ENCODE measurements at regions of chr10 and their contacts with region 1.

Region 1: DNA sequence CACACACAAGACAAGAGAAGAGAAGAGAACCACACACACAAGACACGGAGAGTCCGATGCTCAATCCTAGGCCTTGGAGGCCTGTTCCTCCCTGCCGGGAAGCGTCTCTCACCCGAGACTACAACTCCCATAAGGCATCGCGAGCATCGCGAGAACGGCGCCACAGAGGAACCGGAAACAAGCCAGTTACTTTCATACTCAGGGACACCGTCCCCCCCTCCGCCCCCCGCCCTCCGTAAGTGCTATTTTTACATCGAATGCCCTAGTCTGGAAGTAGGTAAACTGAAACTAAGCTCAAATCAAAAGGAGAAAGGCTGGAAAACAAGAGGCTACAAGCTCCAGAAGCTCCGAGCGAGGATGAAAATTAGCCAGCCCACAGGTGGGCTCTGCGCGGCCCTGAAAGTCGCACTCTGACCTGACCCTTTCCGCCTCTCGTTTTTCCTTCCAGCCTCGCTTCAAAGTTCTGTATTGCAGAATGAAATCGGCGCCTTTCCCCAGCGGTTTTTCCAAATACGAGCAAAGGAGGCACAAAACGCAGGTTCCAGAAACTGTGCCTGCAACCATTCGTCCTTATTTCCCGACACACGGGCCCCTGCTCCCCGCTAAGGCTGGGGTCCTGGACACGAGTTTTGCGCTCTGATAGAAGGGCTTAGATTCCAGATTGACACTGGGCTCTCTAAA is 11.5 kb upstream of the DNAJC12 start:
- DNase-seq: peak; percentile 90
- ATAC-seq: peak; percentile 95
- H3K4me3 Mint-ChIP-seq: peak overlapping the region; percentile 94
- H3K27ac Mint-ChIP-seq: peak overlapping the region; percentile 96
- H3K4me1 Mint-ChIP-seq: peaks cover 13% of the 10 kb centered on the region
- H3K27me3 Mint-ChIP-seq: no peaks in the 10 kb centered on the region
- CTCF ChIP-seq: no peak

Region 2: GRCh38 chr10:67764012-67764822 is 85.3 kb before region 1 on chr10:
- CTCF ChIA-PET with region 1: no interaction called
- POLR2A ChIA-PET with region 1: interaction called, 5 read pairs
- intact Hi-C with region 1: loop called (anchors 1 kb)
- DNase-seq: peak; percentile 98
- ATAC-seq: peak; percentile 78
- H3K4me3 Mint-ChIP-seq: peak overlapping the region; percentile 94
- H3K27ac Mint-ChIP-seq: peak overlapping the region; percentile 99
- H3K4me1 Mint-ChIP-seq: peaks cover 31% of the 10 kb centered on the region
- H3K27me3 Mint-ChIP-seq: peaks cover 4% of the 10 kb centered on the region
- CTCF ChIP-seq: no peak

Region 3: GRCh38 chr10:67837541-67838314 is 11.7 kb before region 1 on chr10 and contains the start of gene DNAJC12:
- CTCF ChIA-PET with region 1: no interaction called
- POLR2A ChIA-PET with region 1: no interaction called
- intact Hi-C with region 1: no loop called
- DNase-seq: no peak
- ATAC-seq: peak; percentile 69
- H3K4me3 Mint-ChIP-seq: no peak within 1 kb of the TSS
- H3K27ac Mint-ChIP-seq: no peak within 1 kb of the TSS
- H3K4me1 Mint-ChIP-seq: peaks cover 2% of the 10 kb centered on the region
- H3K27me3 Mint-ChIP-seq: no peaks in the 10 kb centered on the region
- CTCF ChIP-seq: no peak
- total RNA-seq, gene DNAJC12: 0.31 TPM in 1 of 2 replicates, not detected in the other

Region 4: GRCh38 chr10:67884313-67884841 is 34.9 kb after region 1 on chr10 and contains the start of gene SIRT1:
- CTCF ChIA-PET with region 1: interaction called, 3 read pairs
- POLR2A ChIA-PET with region 1: interaction called, 10 read pairs
- intact Hi-C with region 1: loop called (anchors 1 kb)
- DNase-seq: peak; percentile 97
- ATAC-seq: peak; percentile 81
- H3K4me3 Mint-ChIP-seq: peak within 1 kb of the TSS; percentile 92
- H3K27ac Mint-ChIP-seq: peak within 1 kb of the TSS; percentile 96
- H3K4me1 Mint-ChIP-seq: peaks cover 31% of the 10 kb centered on the region
- H3K27me3 Mint-ChIP-seq: no peaks in the 10 kb centered on the region
- CTCF ChIP-seq: no peak
- total RNA-seq, gene SIRT1: 30.1 and 31.6 TPM in 2 replicates

Region 5: GRCh38 chr10:68301790-68302502 is 452.5 kb after region 1 on chr10:
- CTCF ChIA-PET with region 1: interaction called, 44 read pairs
- POLR2A ChIA-PET with region 1: interaction called, 6 read pairs
- intact Hi-C with region 1: no loop called
- DNase-seq: no peak
- ATAC-seq: peak; percentile 62
- H3K4me3 Mint-ChIP-seq: no peak overlapping the region
- H3K27ac Mint-ChIP-seq: peak overlapping the region; percentile 90
- H3K4me1 Mint-ChIP-seq: peaks cover 31% of the 10 kb centered on the region
- H3K27me3 Mint-ChIP-seq: no peaks in the 10 kb centered on the region
- CTCF ChIP-seq: no peak

Region 6: GRCh38 chr10:68526626-68527307 is 677.3 kb after region 1 on chr10:
- CTCF ChIA-PET with region 1: no interaction called
- POLR2A ChIA-PET with region 1: no interaction called
- intact Hi-C with region 1: loop called (anchors 5 kb)
- DNase-seq: no peak
- ATAC-seq: no peak
- H3K4me3 Mint-ChIP-seq: peak overlapping the region; percentile 86
- H3K27ac Mint-ChIP-seq: peak overlapping the region; percentile 73
- H3K4me1 Mint-ChIP-seq: peaks cover 14% of the 10 kb centered on the region
- H3K27me3 Mint-ChIP-seq: no peaks in the 10 kb centered on the region
- CTCF ChIP-seq: no peak

Measured in activated B cell treated with CpG ODN at 0.5 μM for 24 hours (primary cell).